ENCODE measurements at regions of chr5 and their contacts with region 1.

Region 1: DNA sequence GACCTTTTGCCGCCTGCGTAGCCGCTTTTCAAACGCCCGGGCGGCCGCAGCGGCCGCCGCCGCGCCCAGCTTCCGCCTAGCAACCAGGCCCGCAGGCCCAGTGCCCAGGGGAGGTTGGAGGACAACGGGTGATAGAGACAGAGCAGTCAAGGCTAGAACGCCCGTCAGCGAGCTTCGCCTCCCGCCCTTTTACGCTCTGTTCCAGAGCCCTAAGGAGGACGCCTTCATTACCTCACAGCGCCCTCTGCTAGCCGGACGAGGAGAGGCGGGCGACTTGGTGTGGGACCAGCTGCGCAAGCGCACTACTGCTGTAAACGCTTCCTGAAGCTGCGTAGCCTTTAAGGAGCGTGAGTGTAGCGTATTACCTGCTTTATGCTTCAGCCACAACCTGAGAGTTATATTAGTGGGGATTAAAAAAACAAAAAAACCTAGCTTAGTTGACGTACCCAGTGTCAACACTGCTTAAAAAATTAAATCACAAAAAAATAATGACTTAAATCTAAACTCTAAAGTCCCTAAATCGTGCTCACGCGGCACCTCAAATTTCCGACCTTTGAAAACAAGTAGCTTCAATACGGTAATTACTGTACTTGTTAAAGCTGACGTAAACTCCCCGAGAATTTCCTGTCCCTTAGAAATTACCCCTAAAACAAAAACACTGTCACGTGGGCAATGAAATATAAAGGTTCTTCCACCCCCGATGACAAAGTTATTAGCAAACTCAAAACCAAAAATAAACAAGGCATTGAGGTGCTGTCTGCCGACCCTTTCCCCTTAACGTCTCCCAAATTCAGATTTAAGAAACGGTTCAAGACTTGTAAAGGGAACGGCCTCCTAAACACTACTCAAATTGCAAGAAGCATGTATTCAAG is at the start of gene CEP120:
- DNase-seq: peak; percentile 92 to 100
- ATAC-seq: peak; percentile 93 to 99 (median 93)
- H3K4me3 ChIP-seq: peak within 1 kb of the TSS; percentile 76
- H3K4me3 Mint-ChIP-seq: no peak within 1 kb of the TSS
- H3K27ac ChIP-seq: peak within 1 kb of the TSS; percentile 95
- H3K27ac Mint-ChIP-seq: no peak within 1 kb of the TSS
- H3K4me1 ChIP-seq: peaks cover 10% of the 10 kb centered on the region
- H3K4me1 Mint-ChIP-seq: peaks cover 6 to 21% of the 10 kb centered on the region in 2 donors
- H3K27me3 ChIP-seq: no peaks in the 10 kb centered on the region
- H3K27me3 Mint-ChIP-seq: no peaks in the 10 kb centered on the region
- CTCF ChIP-seq: peak; percentile 71
- total RNA-seq, gene CEP120: 51.2 to 58.9 (median 54.6) TPM

Region 2: GRCh38 chr5:123180178-123180577 is 243.3 kb before region 1 on chr5:
- intact Hi-C with region 1: no loop called
- DNase-seq: no peak
- ATAC-seq: no peak
- H3K4me3 ChIP-seq: no peak overlapping the region
- H3K4me3 Mint-ChIP-seq: no peak overlapping the region
- H3K27ac ChIP-seq: no peak overlapping the region
- H3K27ac Mint-ChIP-seq: no peak overlapping the region
- H3K4me1 ChIP-seq: no peaks in the 10 kb centered on the region
- H3K4me1 Mint-ChIP-seq: no peaks in the 10 kb centered on the region
- H3K27me3 ChIP-seq: no peaks in the 10 kb centered on the region
- H3K27me3 Mint-ChIP-seq: no peaks in the 10 kb centered on the region
- CTCF ChIP-seq: no peak

Region 3: DNA sequence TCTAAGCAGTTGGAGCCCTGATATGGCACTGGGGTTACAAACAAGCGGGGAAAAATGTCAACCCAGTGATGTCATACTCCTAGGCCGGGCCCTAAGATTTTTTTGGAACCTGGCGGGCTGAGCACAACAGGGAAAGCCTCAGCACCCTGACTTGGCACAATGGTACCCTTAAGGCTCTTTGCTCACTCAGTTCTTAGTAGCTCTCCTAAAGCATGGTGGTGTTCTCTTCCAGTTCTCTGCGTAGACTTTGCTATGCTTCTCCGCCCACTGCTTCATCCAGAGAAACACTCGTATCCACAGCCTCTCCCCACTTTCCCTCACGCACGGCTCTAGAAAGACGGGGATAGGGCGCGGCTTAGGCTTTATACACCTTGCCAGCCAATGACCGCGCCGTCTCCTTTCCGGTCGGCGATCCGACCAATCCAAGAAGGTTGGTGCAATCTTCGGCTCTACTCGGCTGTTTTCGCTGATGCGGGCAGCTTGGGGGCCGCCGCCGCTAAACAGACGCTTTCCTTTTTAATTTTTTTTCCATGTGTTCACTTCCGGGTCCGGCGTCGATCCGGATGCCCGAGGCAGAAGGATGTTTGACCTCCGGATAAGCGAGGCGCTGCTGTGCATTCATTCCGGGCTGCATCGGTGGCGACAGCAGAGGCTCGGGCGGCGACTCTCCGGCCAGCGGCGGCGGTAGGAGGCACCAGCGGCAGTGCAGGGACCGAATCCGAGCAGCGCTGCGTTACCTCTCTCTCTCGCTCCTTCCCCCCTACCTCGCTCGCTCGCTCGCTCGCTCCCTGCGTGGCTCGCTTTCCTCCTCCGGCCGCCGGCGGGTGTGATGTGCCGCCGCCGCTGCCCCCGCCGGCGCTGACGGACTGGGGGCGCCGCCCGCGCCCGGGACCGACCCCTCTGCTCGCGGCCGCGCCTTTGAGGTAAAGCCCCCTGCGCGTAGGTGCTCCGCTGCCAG is 88.4 kb after region 1 on chr5 and contains the start of gene CSNK1G3:
- intact Hi-C with region 1: loop called (anchors 1 kb)
- DNase-seq: peak; percentile 88 to 95
- ATAC-seq: peak; percentile 86 to 94 (median 89)
- H3K4me3 ChIP-seq: peak within 1 kb of the TSS; percentile 83
- H3K4me3 Mint-ChIP-seq: peak within 1 kb of the TSS; percentile 99
- H3K27ac ChIP-seq: peak within 1 kb of the TSS; percentile 91
- H3K27ac Mint-ChIP-seq: peak within 1 kb of the TSS; percentile 97 to 98
- H3K4me1 ChIP-seq: peaks cover 9% of the 10 kb centered on the region
- H3K4me1 Mint-ChIP-seq: peaks cover 46 to 48% of the 10 kb centered on the region in 2 donors
- H3K27me3 ChIP-seq: no peaks in the 10 kb centered on the region
- H3K27me3 Mint-ChIP-seq: peaks cover 3 to 8% of the 10 kb centered on the region in 2 donors
- CTCF ChIP-seq: no peak
- total RNA-seq, gene CSNK1G3: 96.7 to 111 (median 101) TPM

Region 4: DNA sequence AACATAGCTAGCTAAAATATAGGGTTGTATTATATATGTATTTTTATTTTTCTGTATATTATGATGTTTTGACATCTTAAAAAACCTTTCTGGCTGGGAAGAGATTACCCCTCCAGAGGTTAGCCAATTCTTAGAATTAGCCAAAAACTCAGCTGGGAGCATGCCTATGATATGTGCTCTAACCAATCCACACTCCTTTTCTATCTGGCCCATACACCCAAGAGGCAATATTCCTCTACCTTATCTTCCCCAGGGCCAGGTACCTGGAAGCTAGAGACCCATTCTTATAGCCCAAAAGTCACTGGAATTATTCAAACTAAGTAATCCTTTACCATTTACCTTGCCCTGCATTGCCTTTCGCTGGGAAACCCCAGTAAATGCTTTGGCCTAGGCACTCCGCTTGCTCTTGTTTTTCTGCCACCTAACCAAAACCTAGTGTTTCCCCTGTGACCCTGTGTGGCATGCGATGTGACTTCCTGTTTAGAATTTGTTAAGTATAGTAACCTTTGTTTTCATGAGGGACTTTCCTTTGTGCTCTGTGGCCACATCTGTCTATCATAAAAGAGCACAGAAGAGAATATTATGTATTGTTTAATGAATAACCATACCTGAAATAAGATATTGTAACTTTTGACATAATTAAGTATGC is 125.9 kb after region 1 on chr5:
- intact Hi-C with region 1: loop called (anchors 1 kb)
- DNase-seq: peak; percentile 64 to 90
- ATAC-seq: peak; percentile 95 to 98 (median 97)
- H3K4me3 ChIP-seq: no peak overlapping the region
- H3K4me3 Mint-ChIP-seq: peak overlapping the region; percentile 55
- H3K27ac ChIP-seq: peak overlapping the region; percentile 88
- H3K27ac Mint-ChIP-seq: peak overlapping the region; percentile 96 to 97
- H3K4me1 ChIP-seq: peaks cover 20% of the 10 kb centered on the region
- H3K4me1 Mint-ChIP-seq: peaks cover 23 to 51% of the 10 kb centered on the region in 2 donors
- H3K27me3 ChIP-seq: no peaks in the 10 kb centered on the region
- H3K27me3 Mint-ChIP-seq: no peaks in the 10 kb centered on the region
- CTCF ChIP-seq: no peak

Region 5: GRCh38 chr5:123610665-123611405 is 187.3 kb after region 1 on chr5:
- intact Hi-C with region 1: loop called (anchors 1 kb)
- DNase-seq: peak in 1 of 2 donors; percentile 82
- ATAC-seq: peak; percentile 81 to 88 (median 84)
- H3K4me3 ChIP-seq: no peak overlapping the region
- H3K4me3 Mint-ChIP-seq: no peak overlapping the region
- H3K27ac ChIP-seq: no peak overlapping the region
- H3K27ac Mint-ChIP-seq: peak overlapping the region; percentile 37 to 61
- H3K4me1 ChIP-seq: no peaks in the 10 kb centered on the region
- H3K4me1 Mint-ChIP-seq: no peaks in the 10 kb centered on the region
- H3K27me3 ChIP-seq: no peaks in the 10 kb centered on the region
- H3K27me3 Mint-ChIP-seq: no peaks in the 10 kb centered on the region
- CTCF ChIP-seq: peak; percentile 100